Activated T-helper 1 cell treated with anti-CD3 and anti-CD28 coated beads, Interleukin-12 subunit alpha, Interleukin-12 subunit beta, Interleukin-2, Interleukin-4 antibody, amounts not matched to agents 30 ng/mL and 10 ng/mL and 1 ng/mL, durations not matched to agents 14 hours and 24 hours and 36 hours (primary cell): ENCODE measurements at regions of chr14 and their contacts with region 1.

Region 1: DNA sequence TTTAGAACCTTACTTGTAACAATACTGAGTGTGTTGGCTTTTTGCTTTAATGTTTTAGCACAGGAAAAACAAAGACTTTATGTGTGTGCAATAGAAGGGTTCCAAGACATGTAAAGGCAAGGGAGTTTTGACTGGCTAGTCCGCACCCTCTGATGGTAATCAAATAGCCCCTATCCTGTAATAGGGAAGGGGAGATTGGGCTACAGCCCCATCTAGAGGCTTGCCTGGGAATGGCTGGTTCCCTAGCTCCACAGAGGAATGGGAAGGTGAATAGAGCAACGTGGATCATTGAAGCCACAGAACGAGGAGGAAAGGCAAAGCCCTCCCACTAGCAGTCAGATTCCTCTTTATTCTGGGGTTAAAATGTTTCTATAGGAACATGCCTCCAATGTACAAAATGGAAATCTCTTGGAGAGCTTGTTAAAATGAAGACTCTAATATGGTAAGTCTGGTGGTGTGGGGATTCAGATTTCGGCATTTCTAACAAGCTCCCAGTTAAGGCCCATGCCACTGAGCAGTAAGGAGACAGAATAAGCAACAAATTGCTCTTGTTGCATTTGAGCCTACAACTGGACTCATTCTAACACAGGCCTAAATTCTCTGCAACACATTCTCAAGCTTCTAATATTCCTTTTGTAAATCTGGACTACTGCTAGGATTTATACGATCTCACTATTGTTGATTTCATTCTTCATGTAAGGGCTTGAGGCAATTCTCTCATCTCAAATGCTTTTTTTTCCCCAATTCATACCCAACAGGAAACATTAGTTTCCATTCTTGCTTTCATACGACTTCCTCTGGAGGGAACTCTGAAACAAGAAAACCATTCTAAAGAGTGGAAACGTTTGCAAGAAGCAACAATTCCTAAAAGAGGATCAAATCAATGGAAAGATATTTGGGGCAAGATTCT is 57.1 kb downstream of the NIN start:
- DNase-seq: no peak
- H3K4me3 Mint-ChIP-seq: no peak overlapping the region
- H3K27ac Mint-ChIP-seq: no peak overlapping the region
- H3K4me1 Mint-ChIP-seq: peaks cover 19% of the 10 kb centered on the region
- H3K27me3 Mint-ChIP-seq: no peaks in the 10 kb centered on the region

Region 2: DNA sequence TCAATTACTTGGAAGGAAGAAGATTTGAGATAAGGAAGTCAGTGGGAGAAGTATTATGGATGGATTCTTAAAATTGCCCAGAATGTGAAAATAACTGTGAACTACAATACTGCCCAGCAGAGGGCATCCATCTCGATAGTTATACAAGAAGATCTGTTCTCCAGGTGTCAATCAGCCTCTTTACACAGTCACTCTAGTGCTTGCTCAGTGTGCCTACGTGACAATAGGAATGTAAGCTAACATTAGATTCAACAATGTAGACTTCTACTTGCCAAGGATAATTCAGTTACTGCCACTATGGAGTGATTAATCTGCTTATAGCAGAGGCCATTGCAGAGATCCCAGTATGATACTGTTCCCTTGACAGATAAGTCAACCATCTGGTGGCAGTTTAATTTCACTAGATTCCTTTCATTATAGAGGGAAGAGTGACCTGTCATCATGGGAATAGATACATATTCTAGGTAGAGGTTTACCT is 230.9 kb before region 1 on chr14:
- intact Hi-C with region 1: loop called (anchors 1 kb)
- DNase-seq: peak; percentile 15
- H3K4me3 Mint-ChIP-seq: no peak overlapping the region
- H3K27ac Mint-ChIP-seq: no peak overlapping the region
- H3K4me1 Mint-ChIP-seq: peaks cover 16% of the 10 kb centered on the region
- H3K27me3 Mint-ChIP-seq: peaks cover 13% of the 10 kb centered on the region

Region 3: DNA sequence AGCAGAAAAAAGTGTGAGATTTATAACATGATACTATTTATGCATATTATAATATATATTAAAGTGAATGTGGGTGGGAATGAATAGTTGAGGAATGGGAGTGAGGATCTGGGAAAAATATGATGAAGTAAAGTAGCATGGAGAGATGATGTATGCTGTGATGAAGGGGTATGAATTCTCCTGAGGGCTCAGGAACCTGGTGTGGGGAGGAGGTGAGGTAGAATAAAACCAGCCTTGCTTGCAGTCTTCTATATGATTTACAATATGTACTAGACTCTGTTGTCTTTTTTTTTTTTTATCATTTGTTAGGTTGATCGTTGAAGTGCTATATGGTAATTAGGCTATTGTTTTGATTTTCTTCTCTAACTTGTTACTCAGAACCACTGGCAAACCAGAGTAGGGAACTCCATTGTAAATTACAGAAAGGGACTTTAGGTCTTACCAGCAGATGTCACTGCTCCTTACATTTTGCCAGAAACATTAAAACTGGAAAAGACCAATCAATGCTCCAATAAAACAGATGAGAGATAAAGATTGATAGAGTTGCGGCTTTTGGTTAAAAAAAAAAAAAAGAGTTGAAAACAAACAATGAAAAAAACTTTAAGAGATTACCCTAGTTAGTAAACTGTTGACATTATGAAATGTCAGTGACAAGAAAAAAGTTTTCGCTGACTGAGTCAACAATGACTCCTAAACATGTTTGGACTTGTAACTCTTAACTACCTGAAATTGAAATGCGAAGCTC is 174.0 kb before region 1 on chr14:
- intact Hi-C with region 1: loop called (anchors 1 kb)
- DNase-seq: no peak
- H3K4me3 Mint-ChIP-seq: no peak overlapping the region
- H3K27ac Mint-ChIP-seq: no peak overlapping the region
- H3K4me1 Mint-ChIP-seq: no peaks in the 10 kb centered on the region
- H3K27me3 Mint-ChIP-seq: peaks cover 4% of the 10 kb centered on the region

Region 4: GRCh38 chr14:50619556-50620141 is 154.2 kb before region 1 on chr14:
- intact Hi-C with region 1: loop called (anchors 1 kb)
- DNase-seq: no peak
- H3K4me3 Mint-ChIP-seq: no peak overlapping the region
- H3K27ac Mint-ChIP-seq: no peak overlapping the region
- H3K4me1 Mint-ChIP-seq: no peaks in the 10 kb centered on the region
- H3K27me3 Mint-ChIP-seq: no peaks in the 10 kb centered on the region